Right ventricle myocardium inferior (tissue), 1 donor: ENCODE measurements at regions of chr2 and their contacts with region 1.

Region 1: DNA sequence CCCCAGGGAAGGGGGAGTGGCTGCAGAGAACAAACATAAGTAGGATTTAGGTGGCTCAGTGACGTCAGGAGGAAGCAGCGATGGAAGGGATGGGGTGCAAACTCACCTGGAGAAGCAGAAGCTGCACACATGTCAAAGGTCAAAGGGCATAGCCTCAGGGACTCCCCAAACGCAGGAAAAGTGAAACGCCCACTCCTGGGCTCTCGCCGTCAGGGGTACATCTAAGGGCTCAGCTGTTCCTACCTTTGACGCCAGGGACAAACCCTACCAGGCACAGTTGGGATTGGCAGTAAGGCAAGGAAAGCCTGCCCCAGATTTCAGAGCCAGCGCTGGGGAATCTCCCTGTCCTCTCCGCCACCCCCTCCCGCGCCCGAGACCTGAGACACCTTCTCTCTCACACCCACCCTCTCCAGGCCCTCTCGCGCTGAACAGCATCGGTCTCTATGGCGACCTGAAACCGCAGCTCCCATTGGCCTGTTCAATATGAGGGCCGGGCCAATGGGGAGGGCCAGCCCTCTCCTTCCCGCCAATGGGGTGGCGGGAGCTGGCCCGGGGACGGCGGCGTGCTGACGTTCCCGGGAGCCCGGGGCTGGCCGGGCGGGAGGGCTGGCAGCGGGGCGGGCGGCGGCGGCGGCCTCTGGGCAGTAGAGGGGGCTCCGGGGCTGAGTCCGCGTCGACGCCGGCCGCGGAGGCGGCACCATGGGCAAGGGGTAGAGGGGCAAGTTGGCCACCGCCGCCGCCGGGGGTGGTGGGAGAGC is at the starts of genes CCDC148 and PKP4:
- DNase-seq: peak; percentile 96
- ATAC-seq: peak; percentile 95
- total RNA-seq, gene CCDC148: 0.78 TPM
- total RNA-seq, gene PKP4: 47.9 TPM

Region 2: DNA sequence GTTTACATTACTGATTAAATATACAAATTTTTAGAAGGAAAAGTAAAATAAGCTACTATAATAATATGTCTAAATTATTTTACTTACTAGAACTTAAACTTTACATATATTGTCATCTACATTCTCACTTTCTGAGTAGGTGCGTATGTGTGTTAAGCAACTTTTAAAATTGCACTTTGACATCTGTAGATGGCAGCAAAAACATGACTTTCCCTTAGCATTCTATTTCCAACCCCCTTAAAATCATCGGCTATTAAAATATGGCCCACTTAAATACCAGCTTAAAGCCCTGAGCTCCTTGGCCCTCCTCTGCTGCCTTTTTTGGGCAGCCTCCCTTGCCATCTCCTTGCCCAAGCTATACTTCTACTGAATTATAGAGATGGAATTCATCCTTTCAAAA is 276.8 kb before region 1 on chr2:
- intact Hi-C with region 1: loop called (anchors 5 kb)
- DNase-seq: no peak
- ATAC-seq: no peak

Region 3: GRCh38 chr2:158619496-158619895 is 163.0 kb after region 1 on chr2:
- intact Hi-C with region 1: loop called (anchors 10 kb)
- DNase-seq: no peak
- ATAC-seq: no peak

Region 4: DNA sequence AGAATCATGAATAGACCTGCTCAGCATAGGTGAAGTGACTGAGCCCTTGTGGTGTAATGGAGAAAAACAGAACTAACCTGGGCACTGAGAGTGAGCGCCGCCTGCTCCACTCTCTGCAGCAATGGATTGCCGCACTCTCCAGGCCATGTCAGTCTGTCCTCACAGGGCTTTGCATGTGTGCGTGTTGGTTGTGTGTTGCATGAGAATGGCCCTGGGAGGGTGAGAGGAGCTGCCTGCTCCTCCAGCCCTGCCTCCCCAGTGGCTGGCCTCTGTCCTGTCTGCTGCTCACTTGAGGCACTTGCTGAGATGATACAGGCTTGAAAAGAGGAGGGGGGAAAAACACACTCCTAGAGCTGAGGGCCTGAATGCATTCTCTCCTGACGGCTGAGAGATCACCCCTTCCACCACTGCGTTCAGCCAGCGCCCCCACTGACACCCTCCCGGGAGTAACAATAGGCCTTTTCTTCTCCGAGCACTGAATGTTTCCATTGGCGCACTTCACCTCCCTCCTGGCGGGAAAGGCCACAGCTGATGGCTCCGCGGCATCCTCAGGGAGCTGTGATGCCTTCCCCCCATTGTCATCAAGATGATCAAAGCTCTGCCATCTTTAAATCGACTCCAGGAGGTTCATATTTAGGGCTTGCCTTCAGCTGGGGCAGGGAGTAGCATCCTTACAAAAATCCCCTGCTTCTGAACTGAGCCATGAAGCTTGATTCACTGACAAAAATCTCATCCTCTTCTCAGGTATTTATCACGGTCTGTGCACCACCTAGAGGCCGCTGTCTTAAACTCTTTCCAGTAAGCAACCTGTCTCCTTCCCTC is 288.8 kb after region 1 on chr2:
- intact Hi-C with region 1: loop called (anchors 2 kb)
- DNase-seq: no peak
- ATAC-seq: no peak